GM10248 (cell line): ENCODE measurements at regions of chr16 and their contacts with region 1.

Region 1: DNA sequence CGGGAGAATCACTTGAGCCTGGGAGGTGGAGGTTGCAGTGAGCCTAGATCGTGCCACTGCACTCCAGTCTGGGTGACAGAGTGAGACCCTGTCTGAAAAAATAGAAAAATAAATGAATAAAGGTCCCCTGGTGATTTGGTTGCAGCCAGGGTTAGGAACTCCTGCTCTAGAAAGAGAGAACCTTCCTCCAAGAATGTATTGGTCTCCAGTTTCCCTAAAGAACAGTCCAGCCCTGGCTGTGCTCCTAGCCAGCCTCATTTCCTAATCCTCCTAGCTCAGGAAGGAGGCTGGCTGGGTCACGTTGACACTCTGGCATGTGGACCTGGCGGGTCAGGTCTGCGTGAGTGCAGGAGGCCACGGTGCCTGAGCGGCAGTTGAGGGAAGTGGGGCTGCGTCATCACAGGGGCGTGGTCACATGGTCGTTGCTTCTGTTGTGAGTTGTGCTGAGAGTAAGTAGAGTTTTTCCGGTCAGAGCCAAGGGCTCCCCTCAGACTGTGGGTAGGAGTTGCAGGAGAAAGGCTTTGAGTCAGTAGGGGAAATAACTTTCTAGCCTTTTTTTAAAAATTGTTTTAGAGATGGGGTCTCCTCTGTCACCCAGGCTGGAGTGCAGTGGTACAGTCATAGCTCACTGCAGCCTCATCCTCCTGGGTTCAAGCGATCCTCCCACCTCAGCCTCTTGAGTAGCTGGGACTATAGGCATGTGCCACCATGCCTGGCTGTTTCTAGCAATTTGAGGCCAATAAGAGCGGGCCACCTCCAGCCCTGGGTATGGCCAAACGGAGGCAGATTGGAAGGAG is 193.9 kb upstream of the CIBAR2 start:
- DNase-seq: peak; percentile 84
- CTCF ChIP-seq: no peak

Region 2: DNA sequence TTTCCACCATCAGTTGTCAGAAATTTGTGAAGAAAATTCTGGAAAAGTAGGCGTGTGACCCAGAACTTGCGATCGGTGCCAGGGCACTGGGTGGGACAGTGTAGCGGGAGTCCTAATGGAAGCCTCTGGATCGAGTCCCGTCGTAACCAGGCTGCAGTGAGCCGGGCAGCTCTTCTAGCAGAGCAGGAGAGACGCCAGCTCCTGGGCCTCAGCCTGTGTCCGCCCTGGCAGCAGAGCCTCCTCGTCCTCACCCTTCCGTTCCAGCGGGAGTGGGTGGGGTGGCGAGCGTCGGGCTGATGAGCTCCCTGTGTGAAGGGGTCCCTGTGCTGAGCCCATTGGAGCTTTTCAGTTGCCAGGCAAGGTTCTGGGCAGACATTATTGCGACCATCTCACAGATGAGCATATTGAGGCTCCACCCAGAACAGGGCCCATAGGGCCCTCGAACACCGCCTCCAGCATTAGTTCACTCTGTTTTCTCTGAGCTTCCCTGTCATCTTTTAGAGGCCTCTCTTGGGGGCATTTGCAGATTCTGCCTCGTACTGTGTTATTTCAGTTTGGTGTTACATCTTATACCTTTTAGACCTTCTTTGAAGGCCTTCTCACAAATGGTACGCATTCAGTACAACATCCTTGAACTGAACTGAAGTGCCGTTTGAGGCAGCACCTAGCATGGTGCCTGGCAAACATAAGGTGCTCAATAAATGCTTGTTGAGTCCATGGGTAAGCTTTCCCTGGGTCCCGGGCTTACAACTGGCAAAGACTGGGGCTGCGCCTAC is 13.2 kb after region 1 on chr16:
- CTCF ChIA-PET with region 1: interaction called, 13 read pairs
- POLR2A ChIA-PET with region 1: no interaction called
- DNase-seq: no peak
- CTCF ChIP-seq: no peak

Region 3: DNA sequence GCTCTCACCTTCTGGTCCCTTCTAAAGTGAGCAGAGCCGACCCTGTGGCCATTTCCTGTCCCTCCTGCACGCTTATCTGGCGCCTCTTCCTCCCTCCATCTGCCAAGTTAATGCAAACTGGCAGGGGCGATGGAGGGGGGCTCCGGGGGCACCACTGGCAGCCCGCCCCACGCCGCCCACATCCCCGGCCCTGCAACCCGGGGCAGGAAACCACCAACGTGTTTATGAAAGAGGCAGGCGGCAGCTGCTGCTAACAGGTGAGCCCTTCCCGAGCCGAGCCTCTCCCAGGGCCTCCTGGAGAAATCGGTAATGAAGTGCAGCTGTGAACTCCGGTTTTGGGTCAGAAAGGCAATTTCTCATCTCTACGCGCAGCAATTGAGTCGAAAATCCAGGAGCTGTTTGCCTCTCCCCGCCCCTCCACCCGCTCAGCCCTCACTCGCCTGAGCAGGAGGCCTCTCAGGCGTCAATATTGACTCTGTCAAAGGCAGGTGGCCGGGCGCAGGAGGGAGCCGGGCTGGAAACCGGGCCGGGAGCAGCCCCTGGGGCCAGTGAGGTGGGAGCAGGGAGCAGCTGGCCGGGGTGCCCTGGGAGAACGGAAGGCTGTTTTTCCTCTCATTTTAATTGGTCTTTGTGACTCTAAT is 142.5 kb after region 1 on chr16:
- CTCF ChIA-PET with region 1: no interaction called
- POLR2A ChIA-PET with region 1: no interaction called
- DNase-seq: no peak
- CTCF ChIP-seq: no peak

Region 4: DNA sequence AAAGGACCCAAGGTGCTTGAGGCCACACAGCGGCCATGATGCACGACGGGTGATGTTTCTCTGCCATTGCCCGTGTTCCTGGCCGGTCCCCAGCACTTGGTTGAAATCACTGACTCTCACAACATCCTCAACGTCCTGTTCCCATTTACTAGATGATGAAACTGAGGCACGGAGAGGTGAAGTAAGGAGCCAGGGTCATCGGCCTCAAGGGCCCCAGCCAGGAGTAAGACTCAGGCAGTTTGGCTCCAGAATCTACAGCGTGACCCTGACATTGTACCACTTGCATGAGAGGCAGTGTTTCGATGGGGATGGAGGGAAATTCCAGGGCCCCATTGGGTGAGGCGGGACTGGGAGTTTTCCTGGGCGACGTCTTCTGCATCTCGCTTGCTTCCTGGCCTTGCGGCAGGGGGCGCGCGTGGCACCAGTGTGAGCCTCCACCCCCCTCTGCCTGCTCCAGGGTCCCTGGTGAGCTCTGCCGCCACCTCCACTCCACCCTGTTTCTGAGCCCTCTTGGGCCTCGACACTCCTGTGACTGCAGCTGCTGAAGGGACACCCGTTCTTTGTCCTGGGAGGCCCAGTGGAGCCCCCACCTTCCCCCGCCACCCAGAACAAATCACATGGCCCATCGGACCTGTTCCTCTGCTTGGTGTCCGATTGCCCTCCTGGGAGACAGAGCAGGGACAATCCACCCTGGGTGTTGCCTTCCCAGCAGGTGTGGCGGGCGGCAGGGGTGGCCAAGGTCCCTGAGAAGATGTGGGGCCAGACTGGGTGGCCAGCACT is 174.0 kb after region 1 on chr16:
- CTCF ChIA-PET with region 1: no interaction called
- POLR2A ChIA-PET with region 1: no interaction called
- DNase-seq: peak; percentile 86
- CTCF ChIP-seq: peak; percentile 37